ENCODE measurements at regions of chr6 and their contacts with region 1.

Region 1: DNA sequence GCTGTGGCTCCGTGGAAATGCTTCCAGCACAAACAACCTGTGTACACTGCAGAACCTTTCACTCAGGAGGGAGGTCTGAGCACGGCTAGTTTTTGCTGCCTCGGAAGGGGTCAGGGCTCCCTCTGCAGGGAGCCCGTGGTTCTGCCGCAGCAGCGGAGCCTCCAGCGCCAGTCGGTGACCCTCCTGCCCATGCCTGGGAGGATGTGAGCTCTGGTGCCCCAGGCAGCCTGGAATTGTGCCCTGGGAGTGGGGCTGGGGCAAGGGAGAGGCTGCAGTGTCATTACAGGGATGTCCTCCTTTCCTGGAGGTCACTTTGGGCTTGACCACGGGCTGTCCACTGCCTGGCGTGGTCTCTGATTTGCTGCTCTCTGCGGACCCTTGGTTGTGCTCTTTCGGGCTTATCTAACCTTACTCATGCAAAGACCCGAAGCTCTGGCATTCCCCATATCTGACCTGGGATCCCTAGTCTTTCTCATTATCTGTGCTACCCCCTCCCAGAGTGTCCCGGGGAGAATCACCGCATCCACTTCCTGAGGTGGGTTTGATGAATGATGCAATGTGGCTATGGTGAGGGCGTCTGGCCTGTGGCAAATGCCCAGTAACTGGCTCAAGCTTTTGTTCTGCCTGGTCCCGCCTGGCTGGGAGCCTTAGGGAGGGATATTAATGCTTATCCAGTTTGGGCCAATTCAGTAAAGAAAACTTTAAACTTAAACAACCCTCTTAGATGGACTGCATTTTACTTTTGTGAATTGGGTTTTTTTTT is 59.6 kb upstream of the TAGAP start:
- DNase-seq: peak; percentile 91
- H3K4me3 ChIP-seq: peak overlapping the region; percentile 44
- H3K27ac ChIP-seq: peak overlapping the region; percentile 97
- H3K4me1 ChIP-seq: peaks cover 89% of the 10 kb centered on the region
- CTCF ChIP-seq: peak; percentile 98

Region 2: GRCh38 chr6:158704181-158704822 is 400.0 kb before region 1 on chr6:
- CTCF ChIA-PET with region 1: no interaction called
- POLR2A ChIA-PET with region 1: no interaction called
- intact Hi-C with region 1: loop called (anchors 5 kb)
- DNase-seq: peak; percentile 85
- H3K4me3 ChIP-seq: peak overlapping the region; percentile 51
- H3K27ac ChIP-seq: no peak overlapping the region
- H3K4me1 ChIP-seq: peaks cover 30% of the 10 kb centered on the region
- CTCF ChIP-seq: peak; percentile 99

Region 3: GRCh38 chr6:158801655-158802294 is 302.6 kb before region 1 on chr6:
- CTCF ChIA-PET with region 1: no interaction called
- POLR2A ChIA-PET with region 1: no interaction called
- intact Hi-C with region 1: no loop called
- DNase-seq: no peak
- H3K4me3 ChIP-seq: peak overlapping the region; percentile 58
- H3K27ac ChIP-seq: peak overlapping the region; percentile 62
- H3K4me1 ChIP-seq: peaks cover 95% of the 10 kb centered on the region
- CTCF ChIP-seq: no peak

Region 4: DNA sequence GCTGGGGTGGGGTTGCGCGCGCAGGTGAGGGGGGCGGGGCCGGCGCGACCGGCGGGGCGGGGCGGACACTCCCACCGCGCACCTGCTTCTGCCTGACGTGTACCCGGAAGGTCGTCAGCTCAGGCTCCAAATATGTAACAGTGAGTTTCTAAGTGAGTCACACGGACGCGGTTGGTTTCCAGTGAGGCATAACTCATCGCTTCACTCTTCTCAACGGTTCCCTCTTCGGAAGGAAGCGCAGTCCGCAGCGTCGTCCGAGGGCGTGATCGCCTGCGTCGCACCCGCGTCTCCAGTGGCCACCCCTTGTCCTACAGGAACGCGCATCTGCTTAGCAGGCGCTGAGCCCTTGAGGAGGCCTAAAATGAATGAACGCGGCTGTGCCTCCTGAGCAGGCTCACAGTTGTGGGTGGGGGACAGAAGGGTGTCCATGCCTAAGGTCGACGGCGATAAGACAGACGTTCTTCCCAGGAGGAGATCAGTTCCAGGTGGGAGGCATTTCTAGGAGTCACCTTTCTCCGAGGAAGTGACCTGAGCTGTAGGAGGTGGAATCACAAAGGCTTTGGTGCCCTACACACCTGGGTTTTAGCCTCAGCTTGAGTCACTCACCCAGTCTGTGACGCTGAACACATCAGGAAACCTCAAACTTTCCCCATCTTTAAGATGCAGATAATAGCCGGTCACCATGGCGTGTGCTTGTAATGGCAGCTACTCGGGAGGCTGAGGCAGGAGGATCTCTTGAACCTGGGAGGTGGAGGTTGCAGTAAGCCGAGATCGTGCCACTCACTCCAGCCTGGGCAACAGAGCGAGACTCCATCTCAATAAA is 234.3 kb before region 1 on chr6:
- CTCF ChIA-PET with region 1: no interaction called
- POLR2A ChIA-PET with region 1: interaction called, 4 read pairs
- intact Hi-C with region 1: loop called (anchors 5 kb)
- DNase-seq: peak; percentile 99
- H3K4me3 ChIP-seq: peak overlapping the region; percentile 64
- H3K27ac ChIP-seq: peak overlapping the region; percentile 96
- H3K4me1 ChIP-seq: peaks cover 71% of the 10 kb centered on the region
- CTCF ChIP-seq: 0 out of 2 replicates have a peak, but pooled peaks have one; percentile 31

Region 5: GRCh38 chr6:159008656-159009288 is 95.6 kb before region 1 on chr6:
- CTCF ChIA-PET with region 1: interaction called, 6 read pairs
- POLR2A ChIA-PET with region 1: interaction called, 56 read pairs
- intact Hi-C with region 1: loop called (anchors 1 kb)
- DNase-seq: peak; percentile 85
- H3K4me3 ChIP-seq: peak overlapping the region; percentile 14
- H3K27ac ChIP-seq: peak overlapping the region; percentile 19
- H3K4me1 ChIP-seq: peaks cover 48% of the 10 kb centered on the region
- CTCF ChIP-seq: peak; percentile 89

Region 6: GRCh38 chr6:159116343-159116742 is 12.0 kb after region 1 on chr6:
- CTCF ChIA-PET with region 1: interaction called, 5 read pairs
- POLR2A ChIA-PET with region 1: interaction called, 19 read pairs
- intact Hi-C with region 1: loop called (anchors 1 kb)
- DNase-seq: peak; percentile 80
- H3K4me3 ChIP-seq: peak overlapping the region; percentile 41
- H3K27ac ChIP-seq: peak overlapping the region; percentile 71
- H3K4me1 ChIP-seq: peaks cover 83% of the 10 kb centered on the region
- CTCF ChIP-seq: no peak

Region 7: DNA sequence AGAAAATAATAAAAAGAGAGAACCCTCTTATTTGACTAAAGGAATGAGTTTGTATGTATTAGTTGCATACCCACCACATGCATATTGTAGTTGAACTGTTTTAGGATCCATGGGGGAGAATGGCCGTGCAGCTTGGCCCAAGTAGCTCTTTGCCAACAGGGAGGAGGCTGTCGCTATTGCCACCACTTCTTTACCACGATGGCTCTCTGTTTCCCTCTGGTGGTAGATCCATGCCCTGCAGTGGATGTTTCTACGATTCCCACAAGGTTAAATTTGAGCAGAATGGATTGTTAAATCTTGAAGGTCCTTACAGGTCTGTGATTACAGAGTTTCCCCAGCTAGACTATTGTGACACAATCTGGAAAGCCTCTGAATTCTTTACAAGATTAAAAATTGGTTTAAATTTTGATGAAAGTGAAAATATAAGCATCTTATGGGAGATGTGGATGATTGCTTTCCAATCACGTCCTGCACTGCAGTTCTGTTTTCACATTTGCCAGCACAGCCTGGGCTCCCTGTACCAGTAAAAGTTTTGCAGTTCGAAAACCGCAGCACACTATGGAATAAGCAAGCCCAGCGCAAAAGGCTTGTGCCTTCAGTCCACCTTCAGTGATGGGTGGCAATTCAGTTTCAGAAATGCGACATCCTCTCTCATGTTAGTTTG is 30.5 kb after region 1 on chr6:
- CTCF ChIA-PET with region 1: interaction called, 9 read pairs
- POLR2A ChIA-PET with region 1: interaction called, 116 read pairs
- intact Hi-C with region 1: loop called (anchors 1 kb)
- DNase-seq: peak; percentile 88
- H3K4me3 ChIP-seq: peak overlapping the region; percentile 4
- H3K27ac ChIP-seq: no peak overlapping the region
- H3K4me1 ChIP-seq: peaks cover 52% of the 10 kb centered on the region
- CTCF ChIP-seq: peak; percentile 100

Measured in OCI-LY7 (cell line).